Common myeloid progenitor, CD34-positive (primary cell): ENCODE measurements at regions of chr3 and their contacts with region 1.

Region 1: GRCh38 chr3:143171141-143171970 is 51.8 kb downstream of the CHST2 start:
- DNase-seq: peak in 2 of 3 donors; percentile 64 to 75
- H3K4me3 ChIP-seq: peak overlapping the region in 2 of 7 experiments; percentile 5 to 22
- H3K27ac ChIP-seq: no peak overlapping the region
- H3K4me1 ChIP-seq: peaks cover 19 to 57% (median 44%) of the 10 kb centered on the region in 4 experiments
- H3K27me3 ChIP-seq: no peaks in the 10 kb centered on the region

Region 2: DNA sequence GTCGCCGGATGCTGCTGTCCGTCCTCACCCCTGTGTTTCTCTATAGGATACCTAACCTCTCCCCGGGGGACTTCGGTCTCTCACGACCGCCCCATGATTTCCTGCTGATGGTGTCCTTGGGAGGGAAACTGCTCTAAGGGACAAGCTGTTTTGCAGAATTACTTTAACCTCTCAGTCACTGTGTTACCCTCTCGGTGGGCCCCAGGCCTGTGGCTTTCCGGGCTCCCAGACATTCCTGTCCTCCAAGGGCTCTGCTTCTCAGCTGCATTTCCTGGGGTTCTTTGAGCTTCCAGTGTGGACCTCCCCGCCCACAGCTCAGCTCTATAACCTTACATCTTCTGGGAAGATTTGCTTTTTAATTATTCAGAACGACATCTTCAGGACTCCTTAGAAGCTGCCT is 10.9 kb before region 1 on chr3:
- CTCF ChIA-PET with region 1: interaction called, 10 read pairs
- POLR2A ChIA-PET with region 1: no interaction called
- DNase-seq: no peak
- H3K4me3 ChIP-seq: peak overlapping the region in 1 of 7 experiments; percentile 28
- H3K27ac ChIP-seq: no peak overlapping the region
- H3K4me1 ChIP-seq: peaks cover 0 to 15% (median 10%) of the 10 kb centered on the region in 4 experiments
- H3K27me3 ChIP-seq: no peaks in the 10 kb centered on the region